CD14-positive monocyte (primary cell): ENCODE measurements at regions of chr16 and their contacts with region 1.

Region 1: GRCh38 chr16:84579936-84580335 is 37.9 kb downstream of the COTL1 start:
- DNase-seq: no peak
- H3K4me3 ChIP-seq: no peak overlapping the region
- H3K4me3 Mint-ChIP-seq: no peak overlapping the region
- H3K27ac ChIP-seq: peak overlapping the region in 1 of 2 donors; percentile 55
- H3K27ac Mint-ChIP-seq: peak overlapping the region in 4 of 7 donors; percentile 33 to 73 (median 54)
- H3K4me1 ChIP-seq: peaks cover 37 to 45% of the 10 kb centered on the region in 2 donors
- H3K4me1 Mint-ChIP-seq: peaks cover 52% of the 10 kb centered on the region
- H3K27me3 ChIP-seq: no peaks in the 10 kb centered on the region
- H3K27me3 Mint-ChIP-seq: no peaks in the 10 kb centered on the region
- CTCF ChIP-seq: no peak

Region 2: DNA sequence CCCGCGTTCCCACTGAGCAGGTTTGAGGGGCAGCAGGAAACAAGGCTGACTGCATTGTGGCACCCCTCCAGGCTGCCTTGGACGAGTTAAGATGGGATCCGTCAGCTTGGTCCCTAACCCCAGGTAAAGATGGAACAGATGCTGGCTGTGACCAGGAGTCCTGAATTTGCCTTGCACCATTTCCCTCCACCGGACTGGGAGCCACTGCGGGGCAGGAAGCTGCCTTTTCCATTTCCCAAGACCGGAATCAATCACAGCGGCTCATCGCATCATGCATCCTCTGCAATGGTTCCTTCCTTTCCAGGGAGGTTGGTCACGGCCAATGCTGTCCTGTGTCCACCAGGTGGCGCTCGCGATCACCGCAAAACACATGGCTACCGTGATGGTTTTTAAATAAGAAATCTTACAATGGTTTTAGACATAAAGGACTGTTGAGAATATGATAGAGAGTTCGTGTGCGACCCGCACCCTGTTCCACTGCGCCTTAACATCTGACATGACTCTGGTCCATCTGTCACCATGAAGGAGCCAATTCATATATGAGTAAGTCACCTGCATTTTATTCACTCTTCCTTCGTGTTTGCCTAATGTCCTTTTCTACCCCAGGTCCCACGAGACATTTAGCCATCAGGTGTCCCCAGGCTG is 68.6 kb before region 1 on chr16:
- intact Hi-C with region 1: loop called in 1 of 2 experiments (anchors 5 kb)
- DNase-seq: peak; percentile 77 to 86 (median 81)
- H3K4me3 ChIP-seq: no peak overlapping the region
- H3K4me3 Mint-ChIP-seq: no peak overlapping the region
- H3K27ac ChIP-seq: no peak overlapping the region
- H3K27ac Mint-ChIP-seq: peak overlapping the region in 2 of 7 donors; percentile 49 to 55
- H3K4me1 ChIP-seq: peaks cover 40 to 42% of the 10 kb centered on the region in 2 donors
- H3K4me1 Mint-ChIP-seq: peaks cover 31% of the 10 kb centered on the region
- H3K27me3 ChIP-seq: no peaks in the 10 kb centered on the region
- H3K27me3 Mint-ChIP-seq: peaks cover 0 to 8% (median 0%) of the 10 kb centered on the region in 3 donors
- CTCF ChIP-seq: peak; percentile 95